Left cardiac atrium (tissue), 4 donors: ENCODE measurements at regions of chr9 and their contacts with region 1.

Region 1: GRCh38 chr9:116494815-116495634 is 192.1 kb upstream of the TRIM32 start:
- DNase-seq: no peak
- ATAC-seq: no peak

Region 2: DNA sequence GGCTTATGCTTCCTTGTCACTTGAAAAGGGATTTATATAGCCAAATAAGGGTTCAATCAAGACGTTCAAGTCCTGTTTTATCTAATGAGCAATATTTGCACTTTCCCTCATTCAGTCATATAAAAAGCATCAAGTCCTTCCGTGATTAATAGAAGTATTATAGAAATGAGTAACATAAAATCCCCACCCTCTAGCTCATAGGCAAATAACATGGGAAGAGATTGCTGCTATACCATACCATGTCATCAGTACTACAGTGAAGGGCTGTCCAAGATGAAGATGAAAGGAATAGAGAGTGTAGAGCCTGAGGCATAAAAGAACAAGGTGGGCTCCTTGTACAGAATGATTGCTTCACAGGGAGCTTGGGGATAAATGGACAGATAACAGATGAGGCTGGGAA is 361.9 kb before region 1 on chr9:
- intact Hi-C with region 1: no loop called
- DNase-seq: no peak
- ATAC-seq: no peak

Region 3: GRCh38 chr9:116450378-116451139 is 44.5 kb before region 1 on chr9:
- intact Hi-C with region 1: no loop called
- DNase-seq: no peak
- ATAC-seq: peak in 1 of 2 donors; percentile 60

Region 4: DNA sequence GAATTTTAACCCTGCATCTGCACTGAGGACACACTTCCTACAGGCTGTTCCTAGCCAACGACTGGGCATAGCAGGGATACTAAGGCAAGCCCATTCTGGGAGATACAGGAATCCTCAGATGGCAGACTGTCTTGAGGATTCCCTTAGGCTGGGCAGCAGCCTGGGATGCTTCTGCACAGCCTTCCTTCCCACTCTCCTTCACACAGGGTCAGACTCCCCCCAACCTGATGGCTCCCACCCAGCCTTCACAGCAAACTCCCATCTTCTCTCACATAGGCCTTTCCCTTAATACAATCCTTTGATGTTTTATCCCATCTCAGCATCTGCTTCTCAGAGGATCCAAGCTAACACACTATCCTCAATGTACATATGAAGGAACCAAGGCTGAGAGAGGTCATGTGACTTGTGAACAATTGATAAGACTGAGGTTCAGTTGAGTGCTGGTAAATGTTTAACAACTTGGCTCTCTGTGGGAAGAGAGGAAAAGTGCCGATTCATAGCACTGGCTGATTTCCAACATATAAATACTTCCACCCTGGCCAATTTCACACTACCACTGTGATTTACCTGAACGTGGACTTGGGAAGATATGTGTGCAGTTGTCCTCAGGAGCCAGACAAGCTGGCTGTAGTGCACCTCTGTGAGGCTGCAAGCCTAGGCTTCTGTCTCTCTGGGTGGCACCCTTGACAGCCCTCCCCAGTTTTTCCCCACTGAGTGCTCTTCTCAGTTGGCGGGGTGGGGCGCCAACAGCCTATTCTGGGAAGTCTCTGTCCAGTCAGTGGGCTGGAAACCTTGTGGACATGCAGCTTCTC is 71.9 kb after region 1 on chr9:
- intact Hi-C with region 1: loop called in 1 of 2 experiments (anchors 5 kb)
- DNase-seq: no peak
- ATAC-seq: no peak

Region 5: DNA sequence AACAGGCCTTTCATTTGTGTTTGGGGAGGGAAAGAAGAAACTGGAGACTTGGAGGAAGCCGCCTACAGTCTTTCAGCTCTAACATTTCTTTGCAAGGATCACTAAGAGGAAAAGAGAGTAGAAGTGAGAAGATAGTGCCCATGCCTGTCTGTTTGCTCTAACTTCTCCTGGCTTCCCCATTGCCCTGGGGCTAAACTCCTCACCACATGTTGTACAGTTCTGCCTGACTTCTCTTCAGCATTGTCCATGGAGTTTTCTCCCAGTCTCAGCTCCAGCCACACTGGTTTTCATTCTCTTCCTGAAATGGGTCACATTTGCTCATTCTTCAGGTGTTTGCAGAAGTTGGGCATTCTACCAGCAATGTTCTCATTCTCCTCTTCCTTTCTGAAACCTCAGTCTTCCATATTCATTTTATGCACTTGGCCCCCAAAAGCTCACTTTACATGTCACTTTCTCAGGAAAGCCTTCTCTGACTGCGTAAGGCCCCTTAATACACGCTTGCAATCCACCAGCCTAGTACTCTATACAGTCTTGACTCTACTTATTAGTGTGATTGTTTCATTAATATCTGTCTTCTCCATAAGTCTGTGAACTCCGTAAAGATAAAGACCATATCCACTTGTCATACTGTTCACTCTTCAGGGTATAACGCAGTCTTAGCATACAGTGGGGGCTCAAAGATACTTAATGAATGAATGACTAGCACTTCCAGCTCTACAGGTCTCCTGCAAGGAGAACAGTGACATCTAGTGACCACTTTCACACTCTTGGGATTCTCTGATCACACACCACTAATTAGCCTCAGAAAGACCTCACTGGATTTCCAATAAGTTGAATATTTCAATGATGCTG is 151.9 kb after region 1 on chr9:
- intact Hi-C with region 1: loop called in 1 of 2 experiments (anchors 10 kb)
- DNase-seq: no peak
- ATAC-seq: peak; percentile 81 to 85